ENCODE measurements at regions of chr2 and their contacts with region 1.

Region 1: GRCh38 chr2:168118733-168119514 is 128.5 kb downstream of the STK39 start:
- DNase-seq: peak; percentile 41
- H3K4me3 Mint-ChIP-seq: no peak overlapping the region
- H3K27ac Mint-ChIP-seq: no peak overlapping the region
- H3K4me1 Mint-ChIP-seq: no peaks in the 10 kb centered on the region
- H3K27me3 Mint-ChIP-seq: no peaks in the 10 kb centered on the region
- CTCF ChIP-seq: peak; percentile 49

Region 2: GRCh38 chr2:167264380-167264779 is 854.5 kb before region 1 on chr2:
- CTCF ChIA-PET with region 1: interaction called, 8 read pairs
- intact Hi-C with region 1: loop called (anchors 10 kb)
- DNase-seq: peak; percentile 43
- H3K4me3 Mint-ChIP-seq: no peak overlapping the region
- H3K27ac Mint-ChIP-seq: no peak overlapping the region
- H3K4me1 Mint-ChIP-seq: no peaks in the 10 kb centered on the region
- H3K27me3 Mint-ChIP-seq: no peaks in the 10 kb centered on the region
- CTCF ChIP-seq: peak; percentile 27

Region 3: GRCh38 chr2:167342769-167343168 is 776.2 kb before region 1 on chr2:
- CTCF ChIA-PET with region 1: no interaction called
- intact Hi-C with region 1: loop called (anchors 5 kb)
- DNase-seq: no peak
- H3K4me3 Mint-ChIP-seq: no peak overlapping the region
- H3K27ac Mint-ChIP-seq: no peak overlapping the region
- H3K4me1 Mint-ChIP-seq: no peaks in the 10 kb centered on the region
- H3K27me3 Mint-ChIP-seq: no peaks in the 10 kb centered on the region
- CTCF ChIP-seq: no peak

Region 4: GRCh38 chr2:167964650-167965413 is 154.1 kb before region 1 on chr2:
- CTCF ChIA-PET with region 1: interaction called, 3 read pairs
- intact Hi-C with region 1: loop called (anchors 2 kb)
- DNase-seq: no peak
- H3K4me3 Mint-ChIP-seq: no peak overlapping the region
- H3K27ac Mint-ChIP-seq: no peak overlapping the region
- H3K4me1 Mint-ChIP-seq: no peaks in the 10 kb centered on the region
- H3K27me3 Mint-ChIP-seq: no peaks in the 10 kb centered on the region
- CTCF ChIP-seq: no peak

Measured in Calu3 (cell line).